HCT116 (cell line): ENCODE measurements at regions of chr2 and their contacts with region 1.

Region 1: GRCh38 chr2:195664528-195664927 is 7.5 kb downstream of the SLC39A10 start:
- DNase-seq: no peak
- ATAC-seq: no peak
- H3K4me3 ChIP-seq: no peak overlapping the region
- H3K27ac ChIP-seq: no peak overlapping the region
- H3K4me1 ChIP-seq: peaks cover 0 to 2% of the 10 kb centered on the region in 2 experiments; a peak in 1 of 4 replicates
- H3K27me3 ChIP-seq: no peaks in the 10 kb centered on the region
- CTCF ChIP-seq: peak in 1 of 3 experiments; percentile 40; a peak in 2 of 6 replicates
- POLR2A ChIP-seq: no peak
- RAD21 ChIP-seq: peak; percentile 53

Region 2: GRCh38 chr2:195795879-195796278 is 131.4 kb after region 1 on chr2:
- CTCF ChIA-PET with region 1: no interaction called
- POLR2A ChIA-PET with region 1: no interaction called
- RAD21 ChIA-PET with region 1: no interaction called
- intact Hi-C with region 1: no loop called
- DNase-seq: no peak
- ATAC-seq: no peak
- H3K4me3 ChIP-seq: no peak overlapping the region
- H3K27ac ChIP-seq: no peak overlapping the region
- H3K4me1 ChIP-seq: no peaks in the 10 kb centered on the region
- H3K27me3 ChIP-seq: no peaks in the 10 kb centered on the region
- CTCF ChIP-seq: no peak
- POLR2A ChIP-seq: no peak
- RAD21 ChIP-seq: no peak

Region 3: GRCh38 chr2:195937176-195937575 is 272.6 kb after region 1 on chr2:
- CTCF ChIA-PET with region 1: interaction called, 30 read pairs
- POLR2A ChIA-PET with region 1: no interaction called
- RAD21 ChIA-PET with region 1: no interaction called
- intact Hi-C with region 1: loop called (anchors 1 kb)
- DNase-seq: no peak
- ATAC-seq: no peak
- H3K4me3 ChIP-seq: no peak overlapping the region
- H3K27ac ChIP-seq: no peak overlapping the region
- H3K4me1 ChIP-seq: no peaks in the 10 kb centered on the region
- H3K27me3 ChIP-seq: no peaks in the 10 kb centered on the region
- CTCF ChIP-seq: no peak
- POLR2A ChIP-seq: no peak
- RAD21 ChIP-seq: no peak

Region 4: GRCh38 chr2:196068271-196069209 is 404.0 kb after region 1 on chr2 and contains the start of gene DNAH7:
- CTCF ChIA-PET with region 1: interaction called, 26 read pairs
- POLR2A ChIA-PET with region 1: no interaction called
- RAD21 ChIA-PET with region 1: no interaction called
- intact Hi-C with region 1: loop called (anchors 1 kb)
- DNase-seq: peak; percentile 31
- ATAC-seq: peak; percentile 94
- H3K4me3 ChIP-seq: no peak within 1 kb of the TSS
- H3K27ac ChIP-seq: no peak within 1 kb of the TSS
- H3K4me1 ChIP-seq: peaks cover 0 to 3% of the 10 kb centered on the region in 2 experiments; a peak in 1 of 4 replicates
- H3K27me3 ChIP-seq: no peaks in the 10 kb centered on the region
- CTCF ChIP-seq: peak; percentile 33 to 77 (median 70); a peak in 5 of 6 replicates
- POLR2A ChIP-seq: no peak
- RAD21 ChIP-seq: peak; percentile 69
- total RNA-seq, gene DNAH7: not detected

Region 5: DNA sequence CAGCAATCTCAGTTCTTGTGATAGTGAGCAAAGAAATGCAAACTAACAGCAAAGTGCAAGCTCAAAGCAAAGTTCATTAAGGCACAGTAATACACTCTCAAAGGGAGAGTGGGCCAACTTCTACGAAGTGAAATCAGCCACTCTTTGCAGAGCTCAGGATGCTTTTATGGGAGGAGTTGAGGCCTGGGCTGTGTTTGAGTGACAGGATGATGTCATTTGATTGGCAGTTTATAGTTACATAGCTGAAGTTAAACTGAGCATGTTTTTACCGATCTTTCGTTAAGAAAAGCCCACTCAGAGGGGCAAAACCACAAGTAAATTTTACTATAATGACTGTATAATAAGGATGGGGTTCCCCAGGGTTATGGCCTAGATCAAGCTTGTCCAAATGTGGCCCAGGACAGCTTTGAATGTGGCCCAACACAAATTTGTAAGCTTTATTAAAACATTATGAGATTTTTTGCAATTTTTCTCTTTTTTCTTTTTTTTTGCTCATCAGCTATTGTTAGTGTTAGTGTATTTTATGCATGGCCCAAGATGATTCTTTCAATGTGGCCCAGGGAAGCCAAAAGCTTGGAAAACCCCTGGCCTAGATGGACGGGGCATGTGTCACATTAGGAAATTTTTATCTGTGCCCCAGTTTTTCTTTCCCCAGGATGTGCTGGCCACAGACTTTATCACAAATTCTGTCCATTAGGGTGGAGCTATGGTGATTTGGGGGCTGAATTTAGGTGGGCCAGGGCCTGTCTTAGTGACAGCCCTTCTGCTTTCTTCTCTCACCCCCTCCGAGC is 412.4 kb after region 1 on chr2:
- CTCF ChIA-PET with region 1: interaction called, 11 read pairs
- POLR2A ChIA-PET with region 1: no interaction called
- RAD21 ChIA-PET with region 1: no interaction called
- intact Hi-C with region 1: no loop called
- DNase-seq: no peak
- ATAC-seq: no peak
- H3K4me3 ChIP-seq: no peak overlapping the region
- H3K27ac ChIP-seq: no peak overlapping the region
- H3K4me1 ChIP-seq: no peaks in the 10 kb centered on the region
- H3K27me3 ChIP-seq: no peaks in the 10 kb centered on the region
- CTCF ChIP-seq: no peak
- POLR2A ChIP-seq: no peak
- RAD21 ChIP-seq: no peak